Esophagus squamous epithelium (tissue), 5 donors: ENCODE measurements at regions of chr14 and their contacts with region 1.

Region 1: DNA sequence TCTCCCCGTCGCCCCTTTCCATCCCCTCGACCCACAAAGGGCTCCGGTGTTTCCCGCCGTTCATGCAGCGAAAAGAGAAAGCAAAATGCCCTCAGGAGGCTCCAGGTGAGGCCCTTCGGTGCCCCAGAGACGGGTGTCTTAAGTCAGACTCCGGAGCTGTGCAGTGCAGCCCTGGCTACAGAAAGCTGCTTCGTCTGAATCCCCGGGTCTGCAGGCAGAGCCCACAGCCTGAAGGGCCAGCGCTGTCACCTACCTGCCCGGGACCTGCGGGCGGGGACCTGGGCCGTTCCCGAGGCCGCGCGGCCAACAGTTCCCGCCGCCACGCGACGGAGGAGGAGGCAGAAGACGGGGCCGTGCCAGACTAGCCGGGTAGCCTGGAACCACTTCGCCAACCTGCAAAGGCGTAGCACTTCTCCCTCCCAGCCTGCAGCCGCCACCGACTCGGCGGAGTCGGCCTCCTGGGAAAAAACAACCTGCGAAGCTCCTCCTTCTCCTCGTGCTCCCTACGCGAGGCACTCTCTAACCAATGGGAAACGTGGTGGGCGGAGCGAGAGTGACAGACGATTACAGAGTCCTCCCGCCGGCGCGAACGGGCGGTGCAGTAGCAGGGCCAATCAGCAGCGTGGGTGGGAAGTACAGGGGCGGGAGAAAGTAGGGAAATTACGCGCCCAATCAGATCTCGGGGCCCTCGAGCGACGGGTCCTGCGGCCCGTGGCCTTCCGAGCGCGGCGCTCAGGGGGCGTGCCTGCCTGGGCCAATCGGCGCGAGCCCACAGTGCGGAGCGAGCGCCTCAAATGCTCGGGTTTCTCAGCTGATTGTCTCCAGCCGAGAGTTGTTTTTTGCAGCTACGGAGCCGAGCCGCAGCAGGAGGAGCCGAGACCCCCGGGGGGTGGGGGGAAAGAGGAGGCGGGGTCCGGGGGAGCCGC is at the starts of genes GPR137C and TXNDC16:
- DNase-seq: peak; percentile 96
- H3K4me3 ChIP-seq: peak within 1 kb of the TSS; percentile 70 to 98 (median 82)
- H3K27ac ChIP-seq: peak within 1 kb of the TSS; percentile 87 to 96 (median 94)
- H3K4me1 ChIP-seq: peaks cover 6 to 34% (median 15%) of the 10 kb centered on the region in 3 donors
- H3K27me3 ChIP-seq: no peaks in the 10 kb centered on the region
- CTCF ChIP-seq: peak in 1 of 6 experiments; percentile 5
- POLR2A ChIP-seq: peak in 3 of 4 donors; percentile 86 to 96 (median 95)
- total RNA-seq, gene GPR137C: 0.21 to 0.95 (median 0.35) TPM
- total RNA-seq, gene TXNDC16: 1.5 to 6.1 (median 4.3) TPM

Region 2: GRCh38 chr14:52513249-52513648 is 39.1 kb before region 1 on chr14:
- intact Hi-C with region 1: no loop called
- DNase-seq: no peak
- H3K4me3 ChIP-seq: no peak overlapping the region
- H3K27ac ChIP-seq: no peak overlapping the region
- H3K4me1 ChIP-seq: no peaks in the 10 kb centered on the region
- H3K27me3 ChIP-seq: no peaks in the 10 kb centered on the region
- CTCF ChIP-seq: no peak
- POLR2A ChIP-seq: no peak

Region 3: DNA sequence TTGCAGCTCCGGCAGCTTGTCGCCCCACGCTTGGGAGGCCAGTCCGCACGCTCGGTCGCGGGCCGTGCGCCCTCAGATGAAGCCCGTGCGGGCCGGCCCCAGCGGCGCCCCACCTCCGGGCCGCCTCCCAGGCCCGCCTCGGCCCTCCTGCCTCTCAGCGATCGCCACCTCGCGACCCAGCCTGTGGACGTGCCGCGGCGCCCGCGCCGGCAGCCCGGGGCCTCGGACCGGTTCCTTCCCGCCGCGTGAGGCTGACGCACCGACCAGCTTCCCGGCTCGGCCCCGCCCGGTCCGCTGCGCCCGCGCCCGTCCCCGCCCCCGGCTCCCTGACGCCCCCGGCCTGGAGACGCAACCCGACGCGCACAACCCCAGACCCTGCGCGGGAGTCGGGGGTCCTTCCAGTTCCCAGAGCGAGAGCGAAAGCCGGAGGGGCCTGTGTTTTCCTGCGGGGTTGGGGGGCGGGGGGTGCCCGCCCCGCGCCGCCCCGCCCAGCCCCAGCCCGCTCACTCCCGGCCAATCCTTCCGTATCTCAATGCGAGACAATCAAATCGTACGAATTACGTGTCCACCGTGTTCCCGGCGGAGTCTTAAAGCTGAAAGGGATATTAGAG is 143.3 kb after region 1 on chr14 and contains the start of gene ERO1A:
- intact Hi-C with region 1: loop called (anchors 10 kb)
- DNase-seq: peak; percentile 14
- H3K4me3 ChIP-seq: peak within 1 kb of the TSS; percentile 79 to 95 (median 87)
- H3K27ac ChIP-seq: peak within 1 kb of the TSS; percentile 95 to 99 (median 97)
- H3K4me1 ChIP-seq: peaks cover 0 to 56% (median 26%) of the 10 kb centered on the region in 3 donors
- H3K27me3 ChIP-seq: no peaks in the 10 kb centered on the region
- CTCF ChIP-seq: peak in 1 of 6 experiments; percentile 9
- POLR2A ChIP-seq: peak in 3 of 4 donors; percentile 44 to 86 (median 78)
- total RNA-seq, gene ERO1A: 172 to 1,512 (median 404) TPM

Region 4: GRCh38 chr14:52729925-52730667 is 177.8 kb after region 1 on chr14 and contains the start of gene STYX:
- intact Hi-C with region 1: no loop called
- DNase-seq: peak; percentile 96
- H3K4me3 ChIP-seq: peak within 1 kb of the TSS; percentile 75 to 99 (median 94)
- H3K27ac ChIP-seq: peak within 1 kb of the TSS; percentile 93 to 96 (median 96)
- H3K4me1 ChIP-seq: peaks cover 0 to 24% (median 6%) of the 10 kb centered on the region in 3 donors
- H3K27me3 ChIP-seq: no peaks in the 10 kb centered on the region
- CTCF ChIP-seq: peak; percentile 30 to 53 (median 46)
- POLR2A ChIP-seq: peak in 3 of 4 donors; percentile 63 to 91 (median 87)
- total RNA-seq, gene STYX: 9.7 to 19.7 (median 15.6) TPM